Endothelial cell of umbilical vein (primary cell): ENCODE measurements at regions of chrX and their contacts with region 1.

Region 1: DNA sequence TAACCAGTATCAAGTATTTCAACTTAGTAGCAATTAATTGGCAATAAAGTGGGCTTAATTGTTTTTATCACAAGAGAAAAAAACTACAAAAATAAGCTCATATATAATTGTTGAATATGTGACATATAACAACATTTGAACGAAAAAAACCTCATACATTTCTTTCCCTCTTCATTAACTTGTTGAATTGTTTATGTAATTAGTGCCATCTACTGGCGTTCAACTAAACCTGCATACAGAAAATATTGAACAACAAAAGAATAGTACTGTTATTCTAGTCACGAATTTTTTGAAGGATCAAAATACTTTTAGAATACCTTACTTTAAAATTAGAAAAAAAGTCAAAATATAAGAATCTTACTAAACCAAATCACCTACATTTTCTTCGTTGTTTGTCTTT is 586.5 kb upstream of the FTHL17 start:
- DNase-seq: peak; percentile 28
- H3K4me3 ChIP-seq: no peak overlapping the region
- H3K27ac ChIP-seq: no peak overlapping the region
- H3K4me1 ChIP-seq: no peaks in the 10 kb centered on the region
- H3K27me3 ChIP-seq: no peaks in the 10 kb centered on the region
- CTCF ChIP-seq: peak; percentile 13 to 22
- POLR2A ChIP-seq: no peak

Region 2: GRCh38 chrX:30735839-30736238 is 922.5 kb before region 1 on chrX:
- CTCF ChIA-PET with region 1: no interaction called
- POLR2A ChIA-PET with region 1: no interaction called
- dilution Hi-C with region 1: no loop called
- intact Hi-C with region 1: loop called (anchors 10 kb)
- DNase-seq: peak; percentile 57
- H3K4me3 ChIP-seq: no peak overlapping the region
- H3K27ac ChIP-seq: no peak overlapping the region
- H3K4me1 ChIP-seq: no peaks in the 10 kb centered on the region
- H3K27me3 ChIP-seq: no peaks in the 10 kb centered on the region
- CTCF ChIP-seq: peak; percentile 38 to 58
- POLR2A ChIP-seq: no peak

Region 3: DNA sequence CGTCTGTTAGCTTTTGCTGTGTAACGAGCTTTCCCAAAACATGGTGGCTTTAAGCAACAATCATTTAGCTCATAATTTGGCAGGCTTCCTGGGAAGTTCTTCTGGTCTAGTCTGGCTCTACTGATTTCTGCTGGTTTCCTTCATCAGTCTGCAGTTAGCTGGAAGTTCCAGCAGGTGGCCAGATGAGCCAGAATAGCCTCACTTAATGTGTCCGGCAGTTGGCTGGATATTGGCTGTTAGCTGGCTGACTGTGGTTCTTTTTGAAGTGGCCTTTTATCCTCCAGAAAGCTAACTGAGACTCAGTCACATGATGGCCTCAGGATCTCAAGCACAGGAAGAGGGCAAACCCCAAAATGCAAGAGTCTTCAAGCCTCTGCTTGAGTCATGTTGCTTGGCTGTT is 621.5 kb before region 1 on chrX:
- CTCF ChIA-PET with region 1: interaction called, 92 read pairs
- POLR2A ChIA-PET with region 1: no interaction called
- dilution Hi-C with region 1: no loop called
- intact Hi-C with region 1: loop called (anchors 1 kb)
- DNase-seq: peak; percentile 31
- H3K4me3 ChIP-seq: no peak overlapping the region
- H3K27ac ChIP-seq: no peak overlapping the region
- H3K4me1 ChIP-seq: peaks cover 2% of the 10 kb centered on the region
- H3K27me3 ChIP-seq: no peaks in the 10 kb centered on the region
- CTCF ChIP-seq: peak; percentile 44 to 58
- POLR2A ChIP-seq: no peak

Region 4: DNA sequence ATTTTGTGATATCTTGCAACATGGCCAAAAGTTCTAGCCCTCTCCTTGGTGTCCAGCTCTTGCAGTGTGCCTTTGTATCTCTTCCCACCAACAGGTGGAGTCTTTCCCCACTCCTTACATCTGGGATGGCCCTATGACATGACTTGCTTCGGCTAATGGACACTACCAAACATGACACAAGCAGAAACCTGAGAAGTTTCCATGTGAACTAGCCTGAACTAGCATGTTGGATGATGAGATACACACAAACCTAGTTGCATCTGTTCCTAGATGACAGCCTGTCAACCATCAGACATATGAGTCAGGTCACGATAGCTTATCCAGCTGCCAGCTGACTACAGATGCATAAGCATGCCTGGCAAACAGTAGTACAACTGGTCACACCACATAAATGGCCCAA is 379.0 kb before region 1 on chrX:
- CTCF ChIA-PET with region 1: interaction called, 20 read pairs
- POLR2A ChIA-PET with region 1: no interaction called
- dilution Hi-C with region 1: no loop called
- intact Hi-C with region 1: loop called (anchors 1 kb)
- DNase-seq: peak; percentile 6
- H3K4me3 ChIP-seq: no peak overlapping the region
- H3K27ac ChIP-seq: no peak overlapping the region
- H3K4me1 ChIP-seq: no peaks in the 10 kb centered on the region
- H3K27me3 ChIP-seq: no peaks in the 10 kb centered on the region
- CTCF ChIP-seq: no peak
- POLR2A ChIP-seq: no peak

Region 5: GRCh38 chrX:31423609-31424189 is 234.7 kb before region 1 on chrX:
- CTCF ChIA-PET with region 1: interaction called, 6 read pairs
- POLR2A ChIA-PET with region 1: no interaction called
- dilution Hi-C with region 1: no loop called
- intact Hi-C with region 1: loop called (anchors 2 kb)
- DNase-seq: peak; percentile 44
- H3K4me3 ChIP-seq: no peak overlapping the region
- H3K27ac ChIP-seq: no peak overlapping the region
- H3K4me1 ChIP-seq: no peaks in the 10 kb centered on the region
- H3K27me3 ChIP-seq: no peaks in the 10 kb centered on the region
- CTCF ChIP-seq: peak; percentile 33 to 42
- POLR2A ChIP-seq: no peak

Region 6: DNA sequence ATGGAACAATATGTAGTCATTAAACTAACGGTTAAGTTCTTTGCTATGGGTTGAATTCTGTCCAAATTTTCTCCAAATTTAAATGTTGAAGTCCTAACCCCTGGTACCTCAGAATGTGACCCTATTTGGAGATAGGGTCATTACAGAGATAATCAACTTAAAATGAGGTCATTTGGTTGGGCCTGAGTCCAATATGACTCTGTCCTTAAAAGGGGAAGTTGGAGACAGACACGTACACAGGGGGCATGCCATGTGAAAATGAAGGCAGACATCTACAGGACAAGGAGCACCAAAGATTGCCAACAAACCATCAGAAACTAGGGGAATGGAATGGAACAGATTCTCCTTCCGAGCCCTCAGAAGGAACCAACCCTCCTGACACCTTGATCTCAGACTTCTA is 94.6 kb before region 1 on chrX:
- CTCF ChIA-PET with region 1: no interaction called
- POLR2A ChIA-PET with region 1: no interaction called
- dilution Hi-C with region 1: no loop called
- intact Hi-C with region 1: no loop called
- DNase-seq: no peak
- H3K4me3 ChIP-seq: no peak overlapping the region
- H3K27ac ChIP-seq: no peak overlapping the region
- H3K4me1 ChIP-seq: no peaks in the 10 kb centered on the region
- H3K27me3 ChIP-seq: no peaks in the 10 kb centered on the region
- CTCF ChIP-seq: no peak
- POLR2A ChIP-seq: no peak